ENCODE measurements at regions of chr1 and their contacts with region 1.

Region 1: DNA sequence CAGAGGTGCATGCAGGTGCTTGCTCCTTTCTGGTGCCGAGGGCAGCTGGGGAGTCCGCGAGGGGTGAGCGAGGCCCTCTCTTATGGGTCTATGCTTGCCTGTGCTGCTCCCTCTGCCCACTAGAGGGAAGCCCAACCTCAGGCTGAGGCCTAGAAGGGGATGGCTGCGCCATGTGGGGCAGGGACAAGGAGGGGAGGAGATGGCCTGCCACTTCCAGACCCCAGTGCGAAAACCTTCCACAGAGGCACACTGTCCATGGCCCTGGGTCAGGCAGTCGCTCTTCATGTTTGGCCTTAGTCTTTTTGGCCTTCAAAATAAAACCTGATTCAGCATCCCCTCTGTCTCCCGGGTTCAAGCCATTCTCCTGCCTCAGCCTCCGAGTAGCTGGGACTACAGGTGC is 14.0 kb downstream of the RHBG start:
- DNase-seq: peak; percentile 80
- H3K4me3 Mint-ChIP-seq: no peak overlapping the region
- H3K27ac Mint-ChIP-seq: no peak overlapping the region
- H3K4me1 Mint-ChIP-seq: peaks cover 11% of the 10 kb centered on the region
- H3K27me3 Mint-ChIP-seq: no peaks in the 10 kb centered on the region
- CTCF ChIP-seq: peak; percentile 94

Region 2: GRCh38 chr1:156090822-156091188 is 292.2 kb before region 1 on chr1:
- CTCF ChIA-PET with region 1: interaction called, 4 read pairs
- POLR2A ChIA-PET with region 1: no interaction called
- intact Hi-C with region 1: loop called (anchors 2 kb)
- DNase-seq: peak; percentile 95
- H3K4me3 Mint-ChIP-seq: no peak overlapping the region
- H3K27ac Mint-ChIP-seq: no peak overlapping the region
- H3K4me1 Mint-ChIP-seq: peaks cover 8% of the 10 kb centered on the region
- H3K27me3 Mint-ChIP-seq: no peaks in the 10 kb centered on the region
- CTCF ChIP-seq: peak; percentile 98

Region 3: DNA sequence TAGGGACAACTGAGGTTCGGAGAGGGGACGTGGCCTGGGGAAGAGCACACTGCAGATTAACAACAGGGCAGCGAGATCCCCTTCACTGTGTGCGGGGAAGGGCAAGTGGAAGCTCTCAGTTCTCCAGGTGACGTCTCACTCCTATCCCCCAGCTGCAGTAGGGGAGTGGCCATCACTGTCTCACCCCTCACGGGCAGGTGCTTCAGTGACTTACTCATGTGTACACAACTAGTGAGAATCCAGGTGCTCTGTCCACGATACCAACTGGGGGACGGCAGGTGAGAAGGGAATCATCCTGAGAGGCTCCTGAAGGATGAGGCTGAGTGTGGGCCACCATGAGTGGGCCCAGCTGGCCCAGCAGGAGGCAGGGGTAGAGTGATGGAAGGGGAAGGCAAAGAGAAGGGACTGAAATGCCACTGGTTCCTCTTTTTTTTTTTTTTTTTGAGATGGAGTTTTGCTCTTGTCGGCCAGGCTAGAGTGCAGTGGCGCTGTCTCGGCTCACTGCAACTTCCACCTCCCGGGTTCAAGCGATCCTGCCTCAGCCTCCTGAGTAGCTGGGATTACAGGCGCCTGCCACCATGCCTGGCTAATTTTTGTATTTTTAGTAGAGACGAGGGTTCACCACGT is 11.9 kb after region 1 on chr1:
- CTCF ChIA-PET with region 1: interaction called, 60 read pairs
- POLR2A ChIA-PET with region 1: interaction called, 3 read pairs
- intact Hi-C with region 1: no loop called
- DNase-seq: no peak
- H3K4me3 Mint-ChIP-seq: no peak overlapping the region
- H3K27ac Mint-ChIP-seq: no peak overlapping the region
- H3K4me1 Mint-ChIP-seq: peaks cover 6% of the 10 kb centered on the region
- H3K27me3 Mint-ChIP-seq: no peaks in the 10 kb centered on the region
- CTCF ChIP-seq: no peak

Region 4: GRCh38 chr1:156445789-156446263 is 62.8 kb after region 1 on chr1:
- CTCF ChIA-PET with region 1: interaction called, 452 read pairs
- POLR2A ChIA-PET with region 1: interaction called, 13 read pairs
- intact Hi-C with region 1: loop called (anchors 1 kb)
- DNase-seq: peak; percentile 91
- H3K4me3 Mint-ChIP-seq: no peak overlapping the region
- H3K27ac Mint-ChIP-seq: no peak overlapping the region
- H3K4me1 Mint-ChIP-seq: no peaks in the 10 kb centered on the region
- H3K27me3 Mint-ChIP-seq: peaks cover 24% of the 10 kb centered on the region
- CTCF ChIP-seq: peak; percentile 99

Region 5: GRCh38 chr1:156591432-156592157 is 208.6 kb after region 1 on chr1 and contains the start of gene NAXE:
- CTCF ChIA-PET with region 1: interaction called, 16 read pairs
- POLR2A ChIA-PET with region 1: interaction called, 5 read pairs
- intact Hi-C with region 1: no loop called
- DNase-seq: peak; percentile 77
- H3K4me3 Mint-ChIP-seq: peak within 1 kb of the TSS; percentile 77
- H3K27ac Mint-ChIP-seq: peak within 1 kb of the TSS; percentile 65
- H3K4me1 Mint-ChIP-seq: peaks cover 13% of the 10 kb centered on the region
- H3K27me3 Mint-ChIP-seq: no peaks in the 10 kb centered on the region
- CTCF ChIP-seq: no peak
- total RNA-seq, gene NAXE: 141 and 155 TPM in 2 replicates

Region 6: DNA sequence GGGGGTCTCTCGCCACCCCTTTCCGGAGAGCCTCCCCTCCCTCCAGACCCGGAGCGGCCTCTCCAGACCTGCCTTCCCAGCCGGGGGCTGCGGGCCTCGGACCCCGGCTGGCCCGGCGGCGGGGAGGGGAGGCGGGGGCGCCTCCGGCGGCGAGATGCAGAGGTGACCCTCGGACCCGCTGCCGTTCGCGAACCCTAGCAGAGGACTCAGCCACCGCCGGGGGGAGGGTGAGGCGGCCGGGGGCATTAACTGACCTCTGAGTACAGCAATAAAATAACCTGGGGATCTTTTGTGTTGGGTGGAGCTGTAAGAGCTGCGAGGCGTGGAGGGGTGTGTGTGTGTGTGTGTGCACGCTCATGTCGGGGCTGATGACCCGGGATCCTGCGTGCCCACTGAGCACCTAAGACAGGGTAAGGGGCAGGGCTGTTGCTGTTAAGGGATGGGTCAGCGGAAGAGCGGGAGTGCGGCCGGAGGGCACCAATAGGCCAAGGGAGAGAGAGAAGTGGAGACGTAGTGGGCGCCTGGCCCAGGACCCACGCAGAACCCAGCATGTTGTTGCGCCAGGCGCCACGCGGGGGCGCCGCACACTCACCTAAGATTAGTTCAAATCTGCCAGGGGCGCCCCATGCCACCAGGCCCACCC is 242.5 kb after region 1 on chr1:
- CTCF ChIA-PET with region 1: interaction called, 12 read pairs
- POLR2A ChIA-PET with region 1: no interaction called
- intact Hi-C with region 1: no loop called
- DNase-seq: peak; percentile 61
- H3K4me3 Mint-ChIP-seq: peak overlapping the region; percentile 35
- H3K27ac Mint-ChIP-seq: no peak overlapping the region
- H3K4me1 Mint-ChIP-seq: peaks cover 12% of the 10 kb centered on the region
- H3K27me3 Mint-ChIP-seq: peaks cover 61% of the 10 kb centered on the region
- CTCF ChIP-seq: peak; percentile 91

Region 7: GRCh38 chr1:156945881-156946661 is 563.0 kb after region 1 on chr1:
- CTCF ChIA-PET with region 1: no interaction called
- POLR2A ChIA-PET with region 1: no interaction called
- intact Hi-C with region 1: no loop called
- DNase-seq: no peak
- H3K4me3 Mint-ChIP-seq: no peak overlapping the region
- H3K27ac Mint-ChIP-seq: no peak overlapping the region
- H3K4me1 Mint-ChIP-seq: no peaks in the 10 kb centered on the region
- H3K27me3 Mint-ChIP-seq: no peaks in the 10 kb centered on the region
- CTCF ChIP-seq: no peak